ENCODE measurements at regions of chr18 and their contacts with region 1.

Region 1: DNA sequence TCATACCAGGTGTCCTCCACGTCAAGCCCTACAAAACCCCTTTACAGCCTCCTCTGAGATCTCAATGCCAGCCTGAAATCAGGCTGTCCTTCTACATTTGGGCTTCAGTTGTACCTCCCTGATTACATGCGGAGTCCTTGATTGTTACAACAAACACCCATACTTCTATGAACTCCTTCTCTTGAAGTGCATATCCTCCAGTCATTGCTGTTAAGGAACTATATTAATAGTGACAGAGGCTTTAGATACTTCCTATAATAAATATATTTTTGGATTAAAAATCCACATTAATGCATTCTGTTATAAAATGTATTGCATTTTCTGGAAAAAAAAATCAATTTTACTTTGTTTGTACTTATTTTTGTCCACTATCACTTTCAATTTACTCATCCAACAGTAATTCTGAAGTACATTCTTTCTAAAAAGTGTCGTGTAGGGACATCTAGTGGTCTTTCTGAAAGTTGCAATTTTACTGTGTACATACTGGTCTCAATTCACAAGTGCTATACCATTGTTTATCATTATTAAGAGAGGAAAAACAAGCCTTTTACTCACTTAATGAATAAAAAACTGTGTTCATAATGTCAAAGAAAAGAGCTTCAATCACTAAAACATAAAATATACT is 316.4 kb downstream of the DSEL start:
- DNase-seq: peak; percentile 19
- H3K4me3 ChIP-seq: no peak overlapping the region
- CTCF ChIP-seq: peak; percentile 57

Region 2: GRCh38 chr18:66694852-66695251 is 505.3 kb before region 1 on chr18:
- CTCF ChIA-PET with region 1: no interaction called
- POLR2A ChIA-PET with region 1: no interaction called
- DNase-seq: no peak
- H3K4me3 ChIP-seq: no peak overlapping the region
- CTCF ChIP-seq: no peak

Region 3: DNA sequence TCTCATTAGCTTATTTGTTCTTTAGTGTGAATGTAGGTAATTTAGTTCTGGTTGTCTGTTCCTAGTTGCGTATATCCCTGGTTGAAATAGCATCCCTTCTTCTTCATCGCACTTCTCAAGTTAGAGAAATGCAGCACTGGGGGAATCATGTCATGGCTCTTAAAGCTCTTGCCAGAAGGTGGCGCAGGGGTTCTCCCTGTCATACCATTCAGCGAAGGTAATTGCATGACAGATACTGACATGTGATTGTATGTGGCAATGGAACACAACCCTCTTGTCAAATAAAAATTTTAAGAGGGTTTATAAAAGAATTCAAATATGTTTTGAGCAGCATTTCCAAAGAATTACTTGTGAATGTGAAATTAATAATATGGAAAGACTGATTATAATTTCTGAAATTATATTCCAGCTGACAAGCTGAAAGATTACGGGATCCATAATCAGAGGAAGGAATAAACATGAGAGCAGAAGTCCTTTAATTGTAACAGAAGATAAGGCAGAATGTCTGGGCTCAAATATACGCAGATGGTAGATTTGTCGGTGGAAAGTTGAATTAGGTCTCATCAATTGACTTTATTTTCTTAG is 95.3 kb before region 1 on chr18:
- CTCF ChIA-PET with region 1: interaction called, 116 read pairs
- POLR2A ChIA-PET with region 1: no interaction called
- DNase-seq: peak; percentile 16
- H3K4me3 ChIP-seq: no peak overlapping the region
- CTCF ChIP-seq: peak; percentile 81

Region 4: DNA sequence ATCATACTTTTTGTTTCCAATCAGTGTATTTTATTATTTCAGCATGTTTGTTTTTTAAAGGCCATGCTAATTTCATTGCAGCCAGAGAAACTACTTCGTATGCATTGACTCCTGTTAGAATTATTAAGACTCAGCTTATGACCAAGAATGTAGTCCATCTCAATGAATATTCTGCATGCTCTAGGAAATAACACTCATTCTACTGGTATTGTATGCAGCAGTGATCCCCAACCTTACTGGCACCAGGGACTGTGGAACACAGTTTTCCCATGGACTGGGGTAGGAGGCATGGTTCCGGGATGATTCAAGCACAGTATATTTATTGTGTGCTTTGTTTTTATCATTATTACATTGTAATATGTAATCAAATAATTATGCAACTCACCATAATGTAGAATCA is 40.4 kb before region 1 on chr18:
- CTCF ChIA-PET with region 1: no interaction called
- POLR2A ChIA-PET with region 1: no interaction called
- DNase-seq: no peak
- H3K4me3 ChIP-seq: no peak overlapping the region
- CTCF ChIP-seq: no peak

Measured in AG04449 (cell line).